ENCODE measurements at regions of chr11 and their contacts with region 1.

Region 1: DNA sequence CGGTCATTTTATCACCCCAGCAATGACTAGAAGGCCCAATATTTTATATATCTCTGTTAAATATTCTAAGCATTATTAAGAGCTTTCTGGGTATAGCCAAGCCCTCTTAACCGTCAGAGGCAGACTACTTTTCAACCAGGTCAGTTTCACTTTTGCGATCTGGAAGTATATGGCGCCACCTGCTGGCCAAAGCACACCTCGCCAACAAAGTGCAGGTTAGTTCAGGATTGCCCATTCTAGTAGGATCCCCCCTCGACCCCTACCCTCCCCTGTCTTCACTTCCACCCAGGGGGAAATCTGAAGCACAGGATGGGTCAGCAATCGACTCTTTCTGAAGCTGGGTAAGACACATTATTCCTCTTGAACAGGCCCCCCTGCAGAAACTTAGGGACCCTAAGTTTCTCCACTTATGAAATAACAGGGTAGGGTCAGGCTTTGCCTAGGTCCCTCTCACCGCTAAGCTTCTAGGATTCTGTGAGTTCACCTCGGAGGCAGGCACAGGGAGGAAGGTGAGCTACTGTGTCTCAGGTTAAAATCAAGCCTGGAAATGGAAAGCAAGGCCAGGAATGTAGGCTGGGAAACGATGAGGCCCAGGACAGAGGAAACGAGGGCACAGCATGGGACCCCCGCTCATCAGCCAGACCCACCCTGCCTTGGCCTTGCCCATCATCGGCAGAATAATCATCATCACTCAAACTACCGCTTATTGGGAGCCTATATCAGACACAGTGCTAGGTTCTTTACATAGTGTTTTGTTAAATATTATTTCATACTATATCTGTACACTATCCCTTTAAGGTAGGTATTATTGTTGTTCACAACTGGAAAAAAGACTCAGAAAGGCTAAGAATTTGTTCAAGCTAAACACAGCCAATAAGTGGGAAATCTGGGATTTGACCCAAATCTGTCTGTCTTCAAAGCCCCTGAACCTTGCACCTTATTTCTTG is 35.6 kb downstream of the KCNJ1 start:
- DNase-seq: peak; percentile 90
- H3K4me3 Mint-ChIP-seq: peak overlapping the region; percentile 60
- H3K27ac Mint-ChIP-seq: peak overlapping the region; percentile 85
- H3K4me1 Mint-ChIP-seq: peaks cover 31% of the 10 kb centered on the region
- H3K27me3 Mint-ChIP-seq: no peaks in the 10 kb centered on the region

Region 2: GRCh38 chr11:128172046-128172878 is 659.2 kb before region 1 on chr11:
- CTCF ChIA-PET with region 1: interaction called, 17 read pairs
- POLR2A ChIA-PET with region 1: no interaction called
- DNase-seq: peak; percentile 89
- H3K4me3 Mint-ChIP-seq: no peak overlapping the region
- H3K27ac Mint-ChIP-seq: no peak overlapping the region
- H3K4me1 Mint-ChIP-seq: peaks cover 6% of the 10 kb centered on the region
- H3K27me3 Mint-ChIP-seq: peaks cover 12% of the 10 kb centered on the region

Region 3: DNA sequence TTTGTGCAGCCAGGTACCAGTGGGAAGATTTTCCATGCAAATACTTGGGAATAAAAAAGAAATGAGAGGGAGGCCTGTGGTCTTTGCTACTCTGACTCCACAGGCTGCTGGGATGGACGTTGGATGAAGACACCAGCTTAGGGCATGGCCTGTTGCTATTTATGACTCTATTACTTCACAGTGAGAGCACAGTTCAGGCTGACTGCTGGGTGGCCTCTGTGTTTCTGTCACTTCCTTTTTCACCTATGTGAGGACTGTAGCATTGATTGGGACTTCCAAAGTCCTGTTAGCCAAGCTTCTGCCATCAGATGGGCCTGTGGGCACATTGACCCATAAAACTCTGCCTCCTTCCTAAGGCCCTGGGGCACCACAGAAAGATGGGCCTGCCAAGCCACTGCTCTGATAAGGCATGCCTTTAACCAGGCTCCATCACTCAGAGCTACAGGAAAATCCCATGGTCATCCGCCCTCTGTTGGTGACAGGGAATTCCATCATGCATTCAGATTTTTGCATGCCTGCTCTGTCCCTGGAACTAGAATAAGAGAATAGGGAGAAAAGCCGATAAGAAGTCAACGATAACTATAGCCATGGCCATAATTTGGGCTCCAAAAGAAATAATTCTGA is 29.0 kb before region 1 on chr11:
- CTCF ChIA-PET with region 1: no interaction called
- POLR2A ChIA-PET with region 1: no interaction called
- DNase-seq: no peak
- H3K4me3 Mint-ChIP-seq: no peak overlapping the region
- H3K27ac Mint-ChIP-seq: no peak overlapping the region
- H3K4me1 Mint-ChIP-seq: peaks cover 17% of the 10 kb centered on the region
- H3K27me3 Mint-ChIP-seq: no peaks in the 10 kb centered on the region

Region 4: GRCh38 chr11:128848815-128849455 is 17.5 kb after region 1 on chr11:
- CTCF ChIA-PET with region 1: interaction called, 36 read pairs
- POLR2A ChIA-PET with region 1: no interaction called
- DNase-seq: peak; percentile 49
- H3K4me3 Mint-ChIP-seq: no peak overlapping the region
- H3K27ac Mint-ChIP-seq: peak overlapping the region; percentile 33
- H3K4me1 Mint-ChIP-seq: peaks cover 27% of the 10 kb centered on the region
- H3K27me3 Mint-ChIP-seq: no peaks in the 10 kb centered on the region

Measured in activated CD4-positive, alpha-beta T cell treated with anti-CD3 and anti-CD28 coated beads, Interleukin-2, amount 10 ng/mL, durations not matched to agents 7 days and 5 days (primary cell).